Left ventricle myocardium inferior (tissue), 1 donor: ENCODE measurements at regions of chr16 and their contacts with region 1.

Region 1: GRCh38 chr16:11715246-11715947 is 27.3 kb downstream of the TXNDC11 start:
- DNase-seq: no peak
- H3K4me3 ChIP-seq: no peak overlapping the region
- H3K27ac ChIP-seq: peak overlapping the region; percentile 27
- H3K4me1 ChIP-seq: peaks cover 37% of the 10 kb centered on the region
- H3K27me3 ChIP-seq: no peaks in the 10 kb centered on the region
- CTCF ChIP-seq: no peak

Region 2: DNA sequence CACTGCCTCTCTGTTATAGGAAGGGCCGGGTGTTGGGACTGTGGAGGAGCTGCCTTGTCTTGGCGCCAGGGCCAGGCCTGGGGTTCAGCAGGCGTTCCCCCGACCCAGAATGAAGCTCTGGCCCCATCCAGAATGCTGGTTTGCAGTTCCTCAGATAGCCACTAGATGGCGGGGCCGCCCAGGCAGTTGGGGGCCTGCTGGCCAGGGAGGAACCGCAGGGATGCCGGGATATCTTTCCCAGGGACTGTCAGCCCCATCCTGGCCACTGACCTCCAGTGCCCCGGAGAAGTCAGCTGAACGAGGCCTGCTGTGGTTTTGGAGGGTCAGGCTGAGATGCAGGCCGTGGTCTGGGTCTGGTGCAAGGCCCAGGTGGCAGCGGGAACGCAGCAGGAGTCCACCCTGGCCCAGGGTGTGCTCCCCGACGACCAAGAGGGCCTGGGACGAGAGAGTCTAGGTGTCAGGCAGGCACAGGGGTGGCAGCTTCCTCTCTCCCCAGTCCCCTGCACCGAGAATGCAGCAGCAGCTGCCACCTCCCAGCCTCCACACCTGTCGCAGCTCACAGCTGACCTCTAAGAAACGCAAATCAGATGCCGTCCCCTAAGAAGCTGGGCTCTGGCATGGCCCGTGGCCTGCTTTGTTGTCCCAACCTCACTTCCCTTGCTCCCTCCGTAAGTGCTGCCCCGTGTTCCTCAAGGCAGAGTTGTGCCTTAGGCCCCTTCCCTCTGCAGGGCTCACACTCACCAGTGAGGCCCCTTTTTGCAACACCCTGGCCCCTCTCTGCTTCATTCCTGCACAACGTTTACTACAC is 319.0 kb before region 1 on chr16:
- intact Hi-C with region 1: loop called (anchors 5 kb)
- DNase-seq: peak; percentile 67
- H3K4me3 ChIP-seq: no peak overlapping the region
- H3K27ac ChIP-seq: peak overlapping the region; percentile 69
- H3K4me1 ChIP-seq: peaks cover 5% of the 10 kb centered on the region
- H3K27me3 ChIP-seq: peaks cover 9% of the 10 kb centered on the region
- CTCF ChIP-seq: no peak

Region 3: DNA sequence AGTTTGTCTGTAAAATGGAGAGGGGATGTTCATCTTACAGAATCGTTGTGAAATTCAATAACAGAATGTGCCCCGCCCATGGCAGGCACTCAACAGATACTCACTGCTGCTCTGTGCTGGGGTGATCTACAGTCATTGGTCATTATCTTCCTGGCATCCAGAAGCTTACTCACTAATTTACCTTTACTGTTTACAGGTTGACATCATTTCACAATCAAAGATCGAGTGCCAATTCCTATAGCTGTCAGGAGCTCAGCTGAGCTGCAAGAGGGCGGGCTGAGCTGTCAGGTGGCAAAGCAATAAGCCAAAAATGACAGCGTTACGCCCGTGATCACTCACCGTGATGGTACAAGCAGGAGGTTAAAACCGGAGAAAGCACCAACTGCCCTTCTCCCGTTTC is 179.9 kb before region 1 on chr16:
- intact Hi-C with region 1: loop called (anchors 10 kb)
- DNase-seq: no peak
- H3K4me3 ChIP-seq: no peak overlapping the region
- H3K27ac ChIP-seq: no peak overlapping the region
- H3K4me1 ChIP-seq: no peaks in the 10 kb centered on the region
- H3K27me3 ChIP-seq: no peaks in the 10 kb centered on the region
- CTCF ChIP-seq: no peak

Region 4: GRCh38 chr16:11650641-11651591 is 64.5 kb before region 1 on chr16:
- intact Hi-C with region 1: no loop called
- DNase-seq: no peak
- H3K4me3 ChIP-seq: no peak overlapping the region
- H3K27ac ChIP-seq: no peak overlapping the region
- H3K4me1 ChIP-seq: no peaks in the 10 kb centered on the region
- H3K27me3 ChIP-seq: no peaks in the 10 kb centered on the region
- CTCF ChIP-seq: no peak

Region 5: DNA sequence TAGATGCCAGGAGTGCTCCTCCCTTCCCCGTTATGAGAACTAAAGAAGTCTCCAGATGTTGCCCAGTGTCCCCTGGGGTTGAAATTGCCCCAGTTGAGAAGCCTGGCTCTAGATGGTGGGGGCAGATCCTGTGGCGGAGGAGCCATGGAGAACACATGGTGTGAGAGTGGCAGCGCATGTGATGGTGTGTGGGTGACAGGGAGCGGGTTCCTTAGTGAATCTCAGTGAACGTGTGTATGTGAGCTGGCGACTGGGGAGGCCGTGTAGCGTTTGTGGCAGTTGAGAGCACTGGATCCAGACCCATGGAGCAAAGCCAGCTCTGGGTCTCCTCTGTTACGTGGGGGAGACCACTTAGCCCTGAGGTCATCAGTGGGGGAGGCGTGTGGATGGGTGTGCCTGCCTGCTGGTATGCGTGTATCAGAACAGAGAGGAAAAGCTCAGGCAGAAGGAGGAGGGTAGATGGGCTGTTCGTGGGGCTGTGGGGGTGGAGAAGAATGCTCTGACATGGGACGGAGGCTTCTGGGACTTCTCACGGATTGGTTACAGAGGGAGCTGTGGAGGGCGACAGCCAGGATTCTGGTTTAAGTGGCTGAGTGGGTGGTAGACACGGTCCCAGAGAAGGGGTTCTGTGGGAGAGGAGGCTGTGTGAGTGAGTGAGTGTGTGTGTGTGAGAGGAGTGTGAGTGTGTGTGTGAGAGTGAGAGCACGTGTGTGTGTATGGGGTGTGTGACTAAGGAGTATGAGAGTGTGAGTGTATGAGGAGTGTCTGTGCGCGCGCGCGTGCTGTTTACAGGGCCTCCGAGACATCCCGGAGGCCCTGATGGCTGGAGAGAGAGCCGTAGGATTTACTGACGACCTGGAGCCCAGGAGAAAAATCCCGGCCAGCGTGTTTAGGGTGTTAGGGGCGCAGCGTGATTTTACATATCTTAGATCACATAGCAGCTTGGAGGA is 455.0 kb after region 1 on chr16:
- intact Hi-C with region 1: no loop called
- DNase-seq: no peak
- H3K4me3 ChIP-seq: no peak overlapping the region
- H3K27ac ChIP-seq: no peak overlapping the region
- H3K4me1 ChIP-seq: peaks cover 42% of the 10 kb centered on the region
- H3K27me3 ChIP-seq: no peaks in the 10 kb centered on the region
- CTCF ChIP-seq: no peak